AG04449 (cell line): ENCODE measurements at regions of chr10 and their contacts with region 1.

Region 1: GRCh38 chr10:100743626-100744135 is 1.7 kb upstream of the PAX2 start:
- DNase-seq: no peak
- H3K4me3 ChIP-seq: no peak overlapping the region
- CTCF ChIP-seq: peak; percentile 58

Region 2: DNA sequence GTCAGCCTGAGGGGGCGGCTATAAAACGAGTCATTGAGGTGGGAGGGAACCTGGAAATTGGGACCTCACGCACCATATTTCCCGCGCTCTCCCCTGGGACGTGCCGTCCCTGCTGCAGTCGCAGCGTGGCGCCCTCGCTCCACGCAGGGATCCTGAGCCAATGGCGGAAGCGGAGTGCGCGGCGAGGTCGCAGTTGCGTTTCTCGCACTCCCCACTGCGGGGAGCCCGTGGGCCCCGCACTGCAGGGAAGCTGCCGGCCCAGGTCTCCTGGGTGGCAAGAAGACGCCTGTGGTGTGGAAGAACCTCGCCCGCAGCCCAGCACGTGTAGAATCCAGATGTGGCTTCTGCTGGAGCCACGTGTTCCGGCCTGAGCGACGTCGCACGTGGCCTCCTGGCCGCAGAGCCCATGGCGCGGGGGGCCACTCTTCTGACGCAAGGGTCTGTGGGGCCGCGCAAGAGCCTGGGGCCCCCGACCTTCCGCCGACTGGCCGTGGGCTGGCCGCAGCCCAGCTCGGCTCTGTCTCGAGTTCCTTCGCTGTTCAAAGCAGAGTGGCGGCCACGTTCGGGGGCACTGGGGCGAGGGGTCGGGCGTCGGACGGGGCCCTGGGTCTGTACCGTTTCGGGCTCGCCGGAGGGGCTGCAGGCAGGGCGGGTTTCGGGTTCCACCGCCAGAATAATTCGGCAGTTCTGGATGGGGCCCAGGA is 181.5 kb before region 1 on chr10:
- CTCF ChIA-PET with region 1: interaction called, 14 read pairs
- POLR2A ChIA-PET with region 1: no interaction called
- DNase-seq: no peak
- H3K4me3 ChIP-seq: no peak overlapping the region
- CTCF ChIP-seq: peak; percentile 91

Region 3: GRCh38 chr10:100670828-100671479 is 72.7 kb before region 1 on chr10:
- CTCF ChIA-PET with region 1: interaction called, 12 read pairs
- POLR2A ChIA-PET with region 1: no interaction called
- DNase-seq: no peak
- H3K4me3 ChIP-seq: no peak overlapping the region
- CTCF ChIP-seq: peak; percentile 67

Region 4: GRCh38 chr10:100723770-100724530 is 19.7 kb before region 1 on chr10:
- CTCF ChIA-PET with region 1: interaction called, 10 read pairs
- POLR2A ChIA-PET with region 1: no interaction called
- DNase-seq: no peak
- H3K4me3 ChIP-seq: no peak overlapping the region
- CTCF ChIP-seq: no peak